ENCODE measurements at regions of chr11 and their contacts with region 1.

Region 1: DNA sequence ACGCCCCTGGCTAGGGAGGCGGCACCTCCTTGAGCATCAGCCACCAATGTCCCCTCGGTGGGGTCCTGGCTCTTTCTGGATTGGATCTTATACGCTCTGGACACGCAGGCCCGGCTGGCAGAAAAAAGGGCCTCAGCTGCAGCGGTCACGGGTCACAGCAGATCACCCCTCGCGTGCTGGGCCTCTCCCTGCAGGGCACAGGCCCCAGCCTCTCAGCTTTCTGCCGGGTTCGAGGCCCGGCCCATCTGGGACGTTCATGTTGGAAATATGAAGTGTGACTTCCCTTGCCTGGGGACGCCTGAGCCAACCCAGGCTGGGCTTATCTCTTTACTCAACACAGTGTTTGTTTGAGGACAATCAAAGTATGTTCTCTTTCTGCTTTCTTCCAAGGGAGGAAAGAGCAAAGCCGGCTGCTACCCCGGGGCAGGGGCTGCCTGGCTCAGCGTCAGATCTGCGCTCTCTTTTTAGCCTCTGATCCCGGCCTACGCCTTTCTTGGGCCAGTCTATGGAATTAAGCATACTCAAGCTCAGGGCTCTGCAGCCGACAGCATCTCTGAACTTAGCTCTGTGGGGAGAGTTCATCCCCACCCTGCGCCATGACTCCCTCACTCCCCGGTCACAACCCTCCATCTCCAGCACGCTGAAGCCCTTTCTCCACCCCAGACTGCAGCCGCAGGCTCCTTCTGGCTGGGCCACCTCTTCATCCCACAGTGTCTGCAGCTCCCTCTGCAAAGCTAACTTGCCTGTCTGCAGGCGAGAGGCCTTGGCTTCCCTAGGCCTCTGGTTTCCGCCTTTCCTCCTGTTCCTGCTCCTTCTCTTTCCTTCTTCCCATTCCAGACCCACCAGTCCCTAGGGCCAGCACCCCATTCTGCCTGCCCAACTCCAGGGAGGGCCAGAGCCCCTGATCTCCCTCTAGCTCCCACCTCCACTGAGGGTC is 38.8 kb downstream of the ADAMTS15 start:
- DNase-seq: no peak
- ATAC-seq: no peak
- H3K4me3 Mint-ChIP-seq: no peak overlapping the region
- H3K27ac Mint-ChIP-seq: no peak overlapping the region
- H3K4me1 Mint-ChIP-seq: no peaks in the 10 kb centered on the region
- H3K27me3 Mint-ChIP-seq: peaks cover 3% of the 10 kb centered on the region; the same call in 1 of the 2 replicates
- CTCF ChIP-seq: no peak

Region 2: GRCh38 chr11:130243816-130244215 is 243.4 kb before region 1 on chr11:
- CTCF ChIA-PET with region 1: no interaction called
- POLR2A ChIA-PET with region 1: no interaction called
- DNase-seq: no peak
- ATAC-seq: no peak
- H3K4me3 Mint-ChIP-seq: no peak overlapping the region
- H3K27ac Mint-ChIP-seq: peak overlapping the region; percentile 51; the same call in 1 of the 2 replicates
- H3K4me1 Mint-ChIP-seq: peaks cover 19% of the 10 kb centered on the region
- H3K27me3 Mint-ChIP-seq: no peaks in the 10 kb centered on the region
- CTCF ChIP-seq: no peak

Region 3: GRCh38 chr11:130522284-130522961 is 35.2 kb after region 1 on chr11:
- CTCF ChIA-PET with region 1: no interaction called
- POLR2A ChIA-PET with region 1: interaction called, 10 read pairs
- DNase-seq: peak; percentile 68
- ATAC-seq: peak; percentile 95
- H3K4me3 Mint-ChIP-seq: no peak overlapping the region
- H3K27ac Mint-ChIP-seq: no peak overlapping the region; the same call in 1 of the 2 replicates
- H3K4me1 Mint-ChIP-seq: peaks cover 30% of the 10 kb centered on the region
- H3K27me3 Mint-ChIP-seq: peaks cover 3% of the 10 kb centered on the region; the same call in 1 of the 2 replicates
- CTCF ChIP-seq: no peak

Region 4: DNA sequence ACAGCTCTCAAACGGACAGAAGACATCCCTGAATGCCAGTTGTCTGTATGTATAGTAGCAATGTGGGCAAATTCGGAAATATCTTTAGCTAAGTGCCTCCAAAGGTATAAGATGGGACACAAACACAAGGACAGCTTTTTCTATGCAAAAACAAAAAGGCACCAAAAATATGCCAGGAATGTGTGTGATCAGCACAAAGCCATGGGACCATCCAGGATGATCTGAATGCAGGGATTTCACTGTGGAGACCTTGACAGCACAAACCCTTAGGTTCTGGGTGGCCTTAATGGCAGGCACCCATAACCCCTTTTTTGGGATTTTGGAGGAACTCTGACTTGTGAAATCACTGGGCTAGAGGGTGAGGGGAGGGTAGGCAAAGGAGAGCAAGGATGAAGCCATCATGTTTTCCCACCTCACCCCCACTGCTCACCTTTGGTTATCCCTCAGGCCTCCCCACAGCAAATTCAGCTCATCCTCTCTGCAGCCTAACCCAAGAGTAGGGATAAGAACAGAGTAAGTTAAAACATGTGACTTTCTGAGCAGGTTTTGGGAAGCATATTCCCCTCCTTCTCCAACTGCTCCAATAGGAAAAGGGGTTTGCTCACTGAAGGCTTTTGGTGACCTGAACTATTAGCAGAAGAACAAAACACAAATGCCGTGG is 274.4 kb after region 1 on chr11:
- CTCF ChIA-PET with region 1: no interaction called
- POLR2A ChIA-PET with region 1: no interaction called
- DNase-seq: no peak
- ATAC-seq: peak; percentile 25
- H3K4me3 Mint-ChIP-seq: no peak overlapping the region; the same call in 1 of the 2 replicates
- H3K27ac Mint-ChIP-seq: peak overlapping the region; percentile 73
- H3K4me1 Mint-ChIP-seq: peaks cover 69% of the 10 kb centered on the region
- H3K27me3 Mint-ChIP-seq: peaks cover 2% of the 10 kb centered on the region; the same call in 1 of the 2 replicates
- CTCF ChIP-seq: no peak